Panc1 (cell line): ENCODE measurements at regions of chr2 and their contacts with region 1.

Region 1: DNA sequence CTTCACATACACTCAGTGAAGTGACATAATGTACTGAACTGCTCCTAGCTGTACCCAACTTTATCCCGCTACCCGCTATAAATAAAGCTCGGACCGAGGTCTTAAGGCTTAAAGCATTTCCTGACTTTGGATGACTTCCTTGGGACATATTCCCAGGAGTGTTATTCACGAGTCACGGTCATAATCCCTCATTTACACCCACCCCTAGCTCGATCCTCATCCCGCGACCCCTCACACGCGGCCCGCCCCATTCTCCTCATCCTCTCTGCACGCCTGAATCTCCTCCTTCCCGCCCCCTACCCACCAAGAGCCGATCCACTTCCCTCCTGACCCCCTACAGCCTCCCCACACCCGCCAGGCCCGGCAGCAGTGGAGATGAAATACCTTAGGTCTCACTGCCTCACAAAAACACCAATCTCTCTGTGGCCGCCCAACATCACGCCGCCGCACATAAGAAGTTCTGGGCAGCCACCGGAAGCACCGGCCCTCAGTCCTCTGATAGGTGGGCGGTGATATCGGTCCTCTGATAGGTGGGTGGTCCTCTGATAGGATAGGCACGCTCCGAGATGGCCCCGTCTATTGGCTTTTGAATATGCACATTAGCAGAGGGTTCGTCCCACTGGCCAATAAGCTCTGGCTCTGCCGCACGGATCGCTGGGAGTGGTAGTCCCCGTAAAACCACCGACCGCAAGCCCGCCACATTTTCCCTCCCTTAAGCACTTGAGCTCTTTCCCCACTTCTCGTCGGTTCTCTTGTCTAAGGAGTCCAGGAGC is at the start of gene WDCP:
- DNase-seq: peak; percentile 95
- ATAC-seq: peak; percentile 95
- H3K4me3 ChIP-seq: peak within 1 kb of the TSS; percentile 94 to 98
- H3K27ac ChIP-seq: peak within 1 kb of the TSS; percentile 82
- H3K4me1 ChIP-seq: peaks cover 25% of the 10 kb centered on the region; the same call in 1 of the 2 replicates
- H3K27me3 ChIP-seq: no peaks in the 10 kb centered on the region
- CTCF ChIP-seq: no peak
- total RNA-seq, gene WDCP: 20.0 TPM

Region 2: GRCh38 chr2:23926750-23927571 is 120.2 kb before region 1 on chr2 and contains the start of gene ATAD2B:
- CTCF ChIA-PET with region 1: interaction called, 3 read pairs
- POLR2A ChIA-PET with region 1: interaction called, 5 read pairs
- in situ Hi-C with region 1: no loop called
- intact Hi-C with region 1: loop called (anchors 10 kb)
- DNase-seq: peak; percentile 84
- ATAC-seq: peak; percentile 93
- H3K4me3 ChIP-seq: peak within 1 kb of the TSS; percentile 92 to 93
- H3K27ac ChIP-seq: peak within 1 kb of the TSS; percentile 93
- H3K4me1 ChIP-seq: peaks cover 8% of the 10 kb centered on the region
- H3K27me3 ChIP-seq: no peaks in the 10 kb centered on the region
- CTCF ChIP-seq: peak; percentile 98
- total RNA-seq, gene ATAD2B: 17.9 TPM